ENCODE measurements at regions of chr3 and their contacts with region 1.

Region 1: DNA sequence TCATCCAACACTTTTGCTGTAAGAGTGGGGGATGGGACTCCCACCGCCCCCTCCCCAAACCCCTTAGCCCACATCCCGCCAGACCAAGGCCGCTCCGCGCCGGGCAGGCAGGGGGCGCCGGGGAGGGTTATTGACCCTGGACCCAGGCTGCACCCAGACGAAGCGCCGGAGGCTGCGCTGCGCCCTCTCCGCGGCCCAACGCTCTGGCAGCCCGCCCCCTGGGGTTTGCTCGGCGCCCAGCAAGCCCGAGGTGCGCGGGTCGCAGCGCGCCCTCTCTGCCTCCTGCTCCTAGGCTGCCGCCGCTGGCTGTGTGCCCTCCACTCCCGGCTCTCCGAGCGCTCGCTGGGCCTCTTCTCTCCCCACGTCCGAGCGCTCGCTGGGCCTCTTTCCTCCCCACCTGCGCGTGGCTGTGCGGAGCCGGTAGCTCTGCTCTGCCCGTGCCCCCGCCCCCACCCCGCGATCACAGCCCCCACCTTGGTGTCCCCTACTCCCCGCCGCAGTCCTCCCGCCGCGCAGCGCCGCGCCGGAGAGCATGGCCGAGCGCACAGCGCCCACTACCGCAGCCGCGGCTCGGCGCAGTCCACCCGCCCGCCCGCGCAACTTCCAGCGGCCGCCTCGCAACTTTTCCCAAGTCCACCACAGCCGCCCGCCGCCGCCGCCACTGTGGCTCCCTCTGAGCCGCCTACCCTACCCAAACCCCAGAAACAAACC is 1.2 kb downstream of the MECOM start:
- DNase-seq: peak in 1 of 2 donors; percentile 88
- H3K4me3 ChIP-seq: peak overlapping the region; percentile 69 to 76
- H3K27ac ChIP-seq: peak overlapping the region; percentile 96 to 97
- H3K4me1 ChIP-seq: peaks cover 0 to 2% of the 10 kb centered on the region in 2 donors
- H3K27me3 ChIP-seq: no peaks in the 10 kb centered on the region
- CTCF ChIP-seq: peak; percentile 53 to 80 (median 68)

Region 2: DNA sequence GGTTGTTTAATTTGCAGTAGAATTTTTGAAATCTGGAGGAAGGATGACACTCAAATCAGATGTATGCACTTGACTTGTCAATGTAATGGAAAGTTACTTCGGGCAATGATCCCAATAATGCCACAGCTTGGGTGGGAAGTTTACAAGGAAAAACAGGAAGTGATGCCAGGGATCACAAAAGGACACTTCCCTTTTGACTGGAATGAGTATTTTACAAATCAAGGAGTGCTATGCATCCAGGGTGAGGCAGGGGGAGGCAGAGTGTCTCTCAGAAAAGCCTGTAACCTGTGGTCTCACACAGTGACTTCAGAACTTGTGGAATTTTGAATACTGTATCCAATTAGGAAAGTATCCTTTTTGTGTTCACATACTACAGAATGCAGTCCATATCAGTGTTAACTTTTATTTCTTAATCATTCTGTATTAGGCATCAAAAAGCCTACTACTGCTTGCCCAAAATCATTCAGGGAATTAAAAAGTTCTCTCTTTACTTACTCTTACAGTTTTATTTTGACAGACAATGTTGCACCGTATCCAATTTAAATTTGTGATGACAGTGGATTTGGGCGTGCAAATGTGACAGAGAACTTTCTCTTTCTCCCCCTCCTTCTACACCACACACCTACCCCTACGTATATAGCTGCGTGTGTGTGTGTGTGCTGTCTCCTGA is 443.8 kb before region 1 on chr3:
- intact Hi-C with region 1: loop called (anchors 2 kb)
- DNase-seq: peak in 1 of 2 donors; percentile 78
- H3K4me3 ChIP-seq: no peak overlapping the region
- H3K27ac ChIP-seq: peak overlapping the region in 1 of 2 donors; percentile 11
- H3K4me1 ChIP-seq: no peaks in the 10 kb centered on the region
- H3K27me3 ChIP-seq: no peaks in the 10 kb centered on the region
- CTCF ChIP-seq: peak; percentile 56 to 78 (median 73)

Region 3: GRCh38 chr3:169390271-169391230 is 271.7 kb before region 1 on chr3:
- intact Hi-C with region 1: loop called (anchors 2 kb)
- DNase-seq: no peak
- H3K4me3 ChIP-seq: no peak overlapping the region
- H3K27ac ChIP-seq: peak overlapping the region; percentile 72 to 74
- H3K4me1 ChIP-seq: peaks cover 0 to 18% of the 10 kb centered on the region in 2 donors
- H3K27me3 ChIP-seq: no peaks in the 10 kb centered on the region
- CTCF ChIP-seq: peak in 1 of 3 experiments; percentile 48

Region 4: GRCh38 chr3:169558371-169558770 is 103.9 kb before region 1 on chr3:
- intact Hi-C with region 1: loop called (anchors 5 kb)
- DNase-seq: no peak
- H3K4me3 ChIP-seq: no peak overlapping the region
- H3K27ac ChIP-seq: peak overlapping the region; percentile 6 to 76
- H3K4me1 ChIP-seq: peaks cover 4 to 24% of the 10 kb centered on the region in 2 donors
- H3K27me3 ChIP-seq: no peaks in the 10 kb centered on the region
- CTCF ChIP-seq: no peak

Region 5: DNA sequence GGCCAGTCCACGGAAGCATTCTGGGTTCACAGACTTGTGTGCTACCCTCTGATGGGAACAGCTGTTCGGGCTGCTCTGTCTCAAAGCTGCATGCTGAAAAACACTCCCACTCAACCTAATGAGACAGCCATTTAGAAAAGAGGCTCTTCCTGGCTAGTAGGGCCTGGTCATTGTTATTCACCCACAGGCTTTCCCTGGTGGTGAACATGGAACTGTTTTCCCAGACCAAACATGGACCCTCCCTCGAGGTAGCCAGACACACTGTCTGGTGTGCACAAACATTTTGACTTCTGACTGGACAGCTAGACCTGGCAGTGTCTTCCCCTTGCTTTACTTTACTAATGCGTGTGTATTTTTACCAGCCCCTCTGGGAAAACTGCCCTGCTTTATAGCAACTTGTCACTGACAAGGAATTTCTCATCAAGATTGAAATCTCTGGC is 37.7 kb before region 1 on chr3:
- intact Hi-C with region 1: loop called (anchors 2 kb)
- DNase-seq: no peak
- H3K4me3 ChIP-seq: no peak overlapping the region
- H3K27ac ChIP-seq: peak overlapping the region; percentile 75 to 85
- H3K4me1 ChIP-seq: peaks cover 6 to 36% of the 10 kb centered on the region in 2 donors
- H3K27me3 ChIP-seq: no peaks in the 10 kb centered on the region
- CTCF ChIP-seq: no peak

Region 6: DNA sequence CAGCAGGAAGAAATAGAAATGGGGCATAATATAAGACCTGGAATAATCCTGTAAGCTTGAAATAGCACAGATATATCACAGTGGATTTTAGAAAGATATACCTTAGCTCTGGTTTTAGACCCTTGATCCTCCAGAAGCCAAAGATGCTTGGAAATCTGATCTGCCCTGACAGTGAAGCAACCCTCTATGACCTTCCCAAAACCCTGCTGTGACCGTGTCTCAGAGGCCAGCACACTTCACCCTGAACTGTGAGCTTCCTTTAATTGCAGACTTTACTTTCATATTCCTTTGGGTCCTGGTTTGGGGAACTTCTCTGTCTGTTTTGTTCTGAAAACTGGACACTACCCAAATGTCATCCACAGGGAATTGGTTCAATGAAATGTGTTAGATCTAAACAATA is 11.8 kb before region 1 on chr3:
- intact Hi-C with region 1: no loop called
- DNase-seq: no peak
- H3K4me3 ChIP-seq: no peak overlapping the region
- H3K27ac ChIP-seq: peak overlapping the region; percentile 27 to 41
- H3K4me1 ChIP-seq: peaks cover 0 to 13% of the 10 kb centered on the region in 2 donors
- H3K27me3 ChIP-seq: no peaks in the 10 kb centered on the region
- CTCF ChIP-seq: no peak

Measured in ascending aorta (tissue), 2 donors.